CD8-positive, alpha-beta T cell (primary cell): ENCODE measurements at regions of chr1 and their contacts with region 1.

Region 1: DNA sequence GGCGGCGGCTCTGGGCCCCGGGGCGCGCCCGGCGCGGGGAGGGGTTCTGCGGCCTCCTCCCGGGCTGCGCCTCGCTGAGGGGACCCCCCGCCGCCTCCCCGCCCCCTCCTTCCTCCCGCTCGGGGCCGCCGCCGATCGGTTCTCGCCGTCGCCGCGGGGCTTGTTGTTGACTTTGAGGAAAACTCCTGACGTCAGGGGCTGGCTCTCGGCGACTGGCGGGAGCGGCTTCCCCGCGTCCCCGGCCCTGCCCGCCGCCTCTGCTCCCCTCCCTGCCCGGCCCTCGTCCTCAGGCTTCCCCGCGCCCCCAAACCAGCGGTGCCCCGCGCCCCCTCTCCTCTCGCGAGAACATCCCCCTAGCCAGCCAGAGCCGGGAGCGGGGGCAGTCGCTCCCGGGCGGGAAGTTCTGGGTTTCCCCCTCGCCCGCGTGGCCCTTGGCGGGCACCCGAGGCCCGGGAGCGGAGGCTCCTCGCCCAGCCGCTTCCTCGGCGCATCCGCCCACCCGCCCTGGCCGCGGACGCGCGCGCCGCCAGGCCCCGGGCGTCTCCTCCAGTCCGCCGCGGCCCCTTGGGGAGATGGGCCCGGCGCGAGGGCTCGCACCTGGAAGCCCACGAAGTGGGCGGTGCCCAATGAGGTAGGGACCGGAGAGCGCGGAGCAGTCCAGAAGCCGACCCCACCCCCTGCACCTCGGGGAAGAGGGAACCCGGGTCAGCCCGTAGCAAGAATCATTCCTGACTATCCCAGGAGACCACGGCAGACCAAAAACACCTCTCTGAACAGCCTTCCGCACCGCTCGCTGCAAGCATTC is 611 bp upstream of the AKT3 start:
- DNase-seq: peak in 8 of 9 experiments; percentile 71 to 92 (median 84)
- ATAC-seq: peak; percentile 44
- H3K4me3 ChIP-seq: peak overlapping the region; percentile 53 to 66
- H3K4me3 Mint-ChIP-seq: peak overlapping the region; percentile 93
- H3K27ac ChIP-seq: peak overlapping the region; percentile 80 to 82
- H3K27ac Mint-ChIP-seq: peak overlapping the region; percentile 96
- H3K4me1 ChIP-seq: peaks cover 24% of the 10 kb centered on the region
- H3K4me1 Mint-ChIP-seq: peaks cover 38% of the 10 kb centered on the region
- H3K27me3 ChIP-seq: no peaks in the 10 kb centered on the region
- H3K27me3 Mint-ChIP-seq: peaks cover 2% of the 10 kb centered on the region
- CTCF ChIP-seq: no peak

Region 2: GRCh38 chr1:242162140-242162539 is 1688.5 kb before region 1 on chr1:
- CTCF ChIA-PET with region 1: no interaction called
- POLR2A ChIA-PET with region 1: no interaction called
- intact Hi-C with region 1: no loop called
- DNase-seq: no peak
- ATAC-seq: no peak
- H3K4me3 ChIP-seq: no peak overlapping the region
- H3K4me3 Mint-ChIP-seq: no peak overlapping the region
- H3K27ac ChIP-seq: no peak overlapping the region
- H3K27ac Mint-ChIP-seq: no peak overlapping the region
- H3K4me1 ChIP-seq: no peaks in the 10 kb centered on the region
- H3K4me1 Mint-ChIP-seq: no peaks in the 10 kb centered on the region
- H3K27me3 ChIP-seq: peaks cover 0 to 2% of the 10 kb centered on the region in 2 experiments
- H3K27me3 Mint-ChIP-seq: peaks cover 6% of the 10 kb centered on the region
- CTCF ChIP-seq: no peak

Region 3: GRCh38 chr1:243705585-243705984 is 145.1 kb before region 1 on chr1:
- CTCF ChIA-PET with region 1: no interaction called
- POLR2A ChIA-PET with region 1: no interaction called
- intact Hi-C with region 1: no loop called
- DNase-seq: no peak
- ATAC-seq: no peak
- H3K4me3 ChIP-seq: no peak overlapping the region
- H3K4me3 Mint-ChIP-seq: no peak overlapping the region
- H3K27ac ChIP-seq: no peak overlapping the region
- H3K27ac Mint-ChIP-seq: no peak overlapping the region
- H3K4me1 ChIP-seq: no peaks in the 10 kb centered on the region
- H3K4me1 Mint-ChIP-seq: peaks cover 6% of the 10 kb centered on the region
- H3K27me3 ChIP-seq: no peaks in the 10 kb centered on the region
- H3K27me3 Mint-ChIP-seq: no peaks in the 10 kb centered on the region
- CTCF ChIP-seq: no peak

Region 4: GRCh38 chr1:243763806-243764205 is 86.8 kb before region 1 on chr1:
- CTCF ChIA-PET with region 1: no interaction called
- POLR2A ChIA-PET with region 1: no interaction called
- intact Hi-C with region 1: loop called in 1 of 2 experiments (anchors 5 kb)
- DNase-seq: no peak
- ATAC-seq: no peak
- H3K4me3 ChIP-seq: no peak overlapping the region
- H3K4me3 Mint-ChIP-seq: no peak overlapping the region
- H3K27ac ChIP-seq: no peak overlapping the region
- H3K27ac Mint-ChIP-seq: no peak overlapping the region
- H3K4me1 ChIP-seq: peaks cover 4% of the 10 kb centered on the region
- H3K4me1 Mint-ChIP-seq: peaks cover 45% of the 10 kb centered on the region
- H3K27me3 ChIP-seq: no peaks in the 10 kb centered on the region
- H3K27me3 Mint-ChIP-seq: no peaks in the 10 kb centered on the region
- CTCF ChIP-seq: no peak

Region 5: GRCh38 chr1:243806310-243806709 is 44.3 kb before region 1 on chr1:
- CTCF ChIA-PET with region 1: no interaction called
- POLR2A ChIA-PET with region 1: no interaction called
- intact Hi-C with region 1: loop called (anchors 5 kb)
- DNase-seq: peak in 1 of 9 experiments; percentile 9
- ATAC-seq: no peak
- H3K4me3 ChIP-seq: no peak overlapping the region
- H3K4me3 Mint-ChIP-seq: no peak overlapping the region
- H3K27ac ChIP-seq: no peak overlapping the region
- H3K27ac Mint-ChIP-seq: peak overlapping the region; percentile 46
- H3K4me1 ChIP-seq: peaks cover 34% of the 10 kb centered on the region
- H3K4me1 Mint-ChIP-seq: peaks cover 75% of the 10 kb centered on the region
- H3K27me3 ChIP-seq: no peaks in the 10 kb centered on the region
- H3K27me3 Mint-ChIP-seq: no peaks in the 10 kb centered on the region
- CTCF ChIP-seq: no peak

Region 6: DNA sequence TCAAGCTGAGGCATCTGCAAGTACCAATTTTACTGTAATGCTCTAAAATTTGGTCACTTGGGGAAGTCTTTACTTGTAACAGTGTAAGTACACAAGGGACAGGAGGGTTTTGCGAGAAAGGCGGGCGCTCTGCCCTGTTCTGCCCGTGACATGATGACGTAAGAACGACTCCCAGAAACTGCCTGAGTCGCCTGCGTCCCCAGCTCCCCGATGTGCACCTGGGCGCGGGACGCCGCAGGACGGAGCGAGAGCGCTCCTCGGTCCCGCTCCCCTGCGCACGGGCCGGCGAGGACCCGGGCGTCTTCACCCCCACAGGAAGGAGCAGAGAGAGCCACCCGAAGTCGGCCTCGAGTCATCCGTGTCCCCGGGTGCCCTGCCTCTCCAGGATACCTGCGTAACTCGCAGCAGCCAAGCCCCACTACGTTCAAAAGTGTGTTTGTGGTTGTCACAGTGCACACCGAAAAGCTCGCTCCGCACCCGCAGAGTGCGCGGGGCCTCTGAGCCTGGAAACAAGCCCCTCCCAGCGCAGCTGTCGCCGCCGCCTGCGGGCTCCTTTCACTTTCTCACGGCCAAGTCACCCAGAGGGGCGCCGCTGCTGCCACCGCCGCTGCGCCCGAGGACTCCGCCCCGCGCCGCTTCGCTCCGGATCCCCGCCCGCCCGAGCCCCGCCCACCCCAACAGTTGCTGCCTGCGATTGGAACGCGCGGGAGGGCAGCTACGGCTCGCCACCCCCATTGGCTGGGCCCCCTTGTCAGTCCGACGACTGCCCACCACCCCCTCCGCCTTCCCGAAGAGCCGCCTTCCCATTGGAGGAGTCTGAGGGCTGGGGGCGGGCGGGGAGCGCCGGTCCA is 197.2 kb after region 1 on chr1:
- CTCF ChIA-PET with region 1: no interaction called
- POLR2A ChIA-PET with region 1: interaction called, 5 read pairs
- intact Hi-C with region 1: loop called (anchors 1 kb)
- DNase-seq: peak; percentile 95 to 99 (median 97)
- ATAC-seq: peak; percentile 72
- H3K4me3 ChIP-seq: peak overlapping the region; percentile 83
- H3K4me3 Mint-ChIP-seq: peak overlapping the region; percentile 89
- H3K27ac ChIP-seq: peak overlapping the region; percentile 95 to 97
- H3K27ac Mint-ChIP-seq: peak overlapping the region; percentile 98
- H3K4me1 ChIP-seq: peaks cover 40% of the 10 kb centered on the region
- H3K4me1 Mint-ChIP-seq: peaks cover 26% of the 10 kb centered on the region
- H3K27me3 ChIP-seq: no peaks in the 10 kb centered on the region
- H3K27me3 Mint-ChIP-seq: no peaks in the 10 kb centered on the region
- CTCF ChIP-seq: no peak

Region 7: DNA sequence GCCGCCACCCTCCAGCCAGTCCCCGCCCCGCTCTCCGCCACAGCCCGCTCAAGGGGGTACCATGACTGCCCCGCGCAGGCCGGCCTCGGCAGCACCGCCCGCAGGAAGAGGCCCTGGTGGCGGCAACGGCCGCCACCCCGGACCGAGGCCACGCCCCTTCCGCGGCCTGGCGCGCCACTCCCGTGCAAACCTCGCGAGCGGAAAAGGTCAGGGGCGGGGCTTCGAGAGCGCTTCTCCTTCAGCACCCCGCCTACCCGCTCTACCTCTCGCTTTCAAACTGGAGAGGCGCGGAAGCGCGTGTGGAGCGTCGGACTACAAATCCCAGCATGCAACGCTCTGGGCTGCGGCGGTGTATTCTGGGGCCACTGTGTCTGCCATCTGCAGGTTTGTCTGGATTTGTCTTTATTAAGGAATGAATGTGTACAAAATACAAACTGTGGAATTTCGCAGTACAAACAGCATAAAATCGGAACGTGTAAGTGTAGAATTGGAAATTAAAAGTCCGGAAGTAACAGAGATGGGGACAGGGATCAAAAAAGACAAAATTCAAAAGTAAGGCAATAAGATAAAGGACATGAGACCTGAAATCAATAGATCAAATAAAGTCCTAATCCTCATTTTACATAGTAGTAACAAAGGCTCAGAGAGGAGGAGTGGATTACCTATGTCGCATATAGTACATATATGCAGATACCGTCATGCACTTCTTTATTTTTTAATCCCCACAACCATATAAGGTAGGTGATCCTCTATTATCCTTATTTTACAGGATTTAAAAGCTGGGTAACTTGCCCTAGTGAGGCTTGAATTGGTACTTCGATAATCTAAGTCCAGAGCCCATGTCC is 601.5 kb after region 1 on chr1:
- CTCF ChIA-PET with region 1: no interaction called
- POLR2A ChIA-PET with region 1: no interaction called
- intact Hi-C with region 1: loop called (anchors 1 to 5 kb)
- DNase-seq: peak; percentile 97 to 100 (median 99)
- ATAC-seq: peak; percentile 83
- H3K4me3 ChIP-seq: peak overlapping the region; percentile 78 to 95
- H3K4me3 Mint-ChIP-seq: peak overlapping the region; percentile 91
- H3K27ac ChIP-seq: peak overlapping the region; percentile 95 to 96
- H3K27ac Mint-ChIP-seq: peak overlapping the region; percentile 97
- H3K4me1 ChIP-seq: peaks cover 32% of the 10 kb centered on the region
- H3K4me1 Mint-ChIP-seq: peaks cover 45% of the 10 kb centered on the region
- H3K27me3 ChIP-seq: no peaks in the 10 kb centered on the region
- H3K27me3 Mint-ChIP-seq: no peaks in the 10 kb centered on the region
- CTCF ChIP-seq: peak; percentile 55